ENCODE measurements at regions of chr10 and their contacts with region 1.

Region 1: GRCh38 chr10:119370111-119370741 is 162.9 kb downstream of the GRK5 start:
- DNase-seq: peak in 4 of 5 donors; percentile 66 to 73 (median 68)
- ATAC-seq: peak in 3 of 4 donors; percentile 47 to 73 (median 62)
- H3K4me3 ChIP-seq: peak overlapping the region in 7 of 12 donors; percentile 11 to 35 (median 21)
- H3K27ac ChIP-seq: peak overlapping the region; percentile 66 to 91 (median 84)
- H3K4me1 ChIP-seq: peaks cover 9 to 91% (median 62%) of the 10 kb centered on the region in 12 donors
- H3K27me3 ChIP-seq: no peaks in the 10 kb centered on the region
- CTCF ChIP-seq: no peak
- POLR2A ChIP-seq: no peak

Region 2: GRCh38 chr10:119409866-119410299 is 39.7 kb after region 1 on chr10:
- intact Hi-C with region 1: loop called in 4 of 10 experiments (anchors 5 kb)
- DNase-seq: peak; percentile 84 to 94 (median 89)
- ATAC-seq: peak; percentile 55 to 75 (median 65)
- H3K4me3 ChIP-seq: no peak overlapping the region
- H3K27ac ChIP-seq: peak overlapping the region; percentile 65 to 89 (median 80)
- H3K4me1 ChIP-seq: peaks cover 5 to 94% (median 78%) of the 10 kb centered on the region in 12 donors
- H3K27me3 ChIP-seq: no peaks in the 10 kb centered on the region
- CTCF ChIP-seq: no peak
- POLR2A ChIP-seq: no peak